Kidney (tissue), 22 donors: ENCODE measurements at regions of chr2 and their contacts with region 1.

Region 1: DNA sequence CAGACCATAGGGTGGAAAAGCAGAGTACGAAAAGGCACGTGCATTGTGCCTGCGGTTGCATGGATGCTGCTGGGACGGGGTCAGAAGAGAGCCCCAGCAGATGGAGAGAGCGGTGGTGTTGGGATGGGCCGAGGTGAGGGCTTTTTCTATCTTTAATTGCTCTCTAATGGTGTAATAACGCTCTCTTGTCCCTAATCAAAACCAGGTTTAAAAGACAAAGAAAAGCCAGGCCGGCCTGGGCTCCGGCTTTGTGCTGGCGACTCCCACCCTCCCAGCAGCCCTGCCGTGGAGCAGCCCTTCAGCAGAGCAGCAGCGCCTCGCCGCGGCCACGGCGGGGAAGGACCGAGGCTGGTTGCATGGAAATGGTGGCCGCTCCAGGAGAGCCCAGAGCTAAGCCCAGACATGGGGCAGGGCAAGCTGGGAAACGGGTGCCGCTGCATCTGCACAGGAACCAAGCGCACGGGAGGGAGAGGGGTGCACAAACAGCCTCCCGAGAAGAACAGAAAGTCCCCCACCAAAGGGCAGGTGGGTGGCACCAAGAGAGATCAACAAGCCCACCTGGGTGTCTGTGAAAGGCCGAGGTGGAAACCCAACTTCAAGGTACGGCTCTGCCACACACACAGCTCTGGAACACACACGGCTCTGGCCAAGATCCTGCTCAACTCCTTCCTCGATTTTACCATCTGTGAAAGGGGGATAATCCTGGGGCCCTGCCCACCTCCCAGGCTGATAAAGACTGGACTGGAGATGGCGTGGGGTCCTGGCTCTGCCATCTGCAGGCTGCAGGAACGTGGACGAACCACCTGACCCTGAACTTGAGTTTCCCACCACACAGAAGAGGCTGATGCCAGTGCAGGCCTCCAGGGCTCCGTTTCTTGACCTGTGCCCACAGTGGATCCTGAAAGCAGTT is 15.0 kb downstream of the HS1BP3 start:
- DNase-seq: peak; percentile 92 to 94 (median 93)
- H3K4me3 ChIP-seq: no peak overlapping the region
- H3K27ac ChIP-seq: peak overlapping the region in 1 of 2 donors; percentile 36
- H3K4me1 ChIP-seq: peaks cover 0 to 19% (median 13%) of the 10 kb centered on the region in 3 donors
- H3K27me3 ChIP-seq: no peaks in the 10 kb centered on the region
- CTCF ChIP-seq: peak; percentile 97

Region 2: GRCh38 chr2:19607931-19608771 is 1027.8 kb before region 1 on chr2:
- intact Hi-C with region 1: no loop called
- DNase-seq: no peak
- H3K4me3 ChIP-seq: no peak overlapping the region
- H3K27ac ChIP-seq: no peak overlapping the region
- H3K4me1 ChIP-seq: no peaks in the 10 kb centered on the region
- H3K27me3 ChIP-seq: no peaks in the 10 kb centered on the region
- CTCF ChIP-seq: no peak

Region 3: GRCh38 chr2:20231632-20232031 is 404.3 kb before region 1 on chr2:
- intact Hi-C with region 1: no loop called
- DNase-seq: peak in 4 of 5 donors; percentile 9 to 93 (median 32)
- H3K4me3 ChIP-seq: no peak overlapping the region
- H3K27ac ChIP-seq: no peak overlapping the region
- H3K4me1 ChIP-seq: peaks cover 0 to 3% (median 0%) of the 10 kb centered on the region in 3 donors
- H3K27me3 ChIP-seq: no peaks in the 10 kb centered on the region
- CTCF ChIP-seq: no peak

Region 4: GRCh38 chr2:20443276-20443920 is 192.5 kb before region 1 on chr2:
- intact Hi-C with region 1: loop called (anchors 5 kb)
- DNase-seq: peak; percentile 61 to 89 (median 86)
- H3K4me3 ChIP-seq: peak overlapping the region in 1 of 3 donors; percentile 41
- H3K27ac ChIP-seq: peak overlapping the region; percentile 74 to 89
- H3K4me1 ChIP-seq: peaks cover 0 to 16% (median 8%) of the 10 kb centered on the region in 3 donors
- H3K27me3 ChIP-seq: no peaks in the 10 kb centered on the region
- CTCF ChIP-seq: peak; percentile 45

Region 5: DNA sequence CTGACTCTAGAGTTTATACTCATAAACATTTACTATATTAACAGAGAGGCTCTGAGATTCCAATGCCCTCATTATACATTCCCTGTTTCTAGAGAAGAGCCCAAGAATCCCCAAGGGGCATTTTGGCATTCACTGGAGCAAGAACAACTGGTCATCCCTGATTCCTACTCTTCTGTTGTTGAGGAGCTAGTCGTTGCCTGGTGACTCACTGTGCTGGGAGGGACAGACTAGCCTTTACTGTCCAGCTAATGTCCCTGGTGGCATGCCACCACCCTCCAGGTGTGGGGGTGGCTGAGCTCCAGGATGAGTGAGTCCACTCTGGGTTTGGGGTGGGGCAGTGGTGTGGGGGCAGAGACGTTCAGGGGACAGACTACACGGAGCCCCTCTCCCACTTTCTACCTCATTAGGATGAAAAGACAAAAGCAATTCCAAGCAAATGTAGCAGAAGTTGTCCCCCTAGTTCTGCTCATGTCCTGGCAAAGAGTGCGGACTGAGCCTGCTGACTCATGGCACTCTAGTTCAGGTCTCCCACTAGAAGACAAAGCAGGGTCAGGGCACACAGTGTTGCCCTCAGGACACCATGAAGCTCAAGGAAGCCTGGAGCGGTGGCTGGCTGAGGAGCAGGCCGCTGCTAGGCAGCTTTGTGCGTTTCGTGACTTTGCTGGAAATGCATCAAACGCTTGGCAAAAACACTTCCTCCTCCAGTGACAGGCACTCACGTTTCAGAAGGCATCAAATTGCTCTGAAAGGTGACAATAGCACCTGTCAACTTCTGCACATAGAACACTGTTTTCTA is 139.7 kb before region 1 on chr2:
- intact Hi-C with region 1: no loop called
- DNase-seq: peak in 3 of 5 donors; percentile 44 to 69 (median 49)
- H3K4me3 ChIP-seq: no peak overlapping the region
- H3K27ac ChIP-seq: peak overlapping the region; percentile 55 to 74
- H3K4me1 ChIP-seq: peaks cover 0 to 14% (median 10%) of the 10 kb centered on the region in 3 donors
- H3K27me3 ChIP-seq: no peaks in the 10 kb centered on the region
- CTCF ChIP-seq: no peak